Natural killer cell (primary cell): ENCODE measurements at regions of chr11 and their contacts with region 1.

Region 1: GRCh38 chr11:125887373-125888324 is at the start of gene HYLS1:
- DNase-seq: peak; percentile 98
- ATAC-seq: peak; percentile 75 to 91 (median 85)
- H3K4me3 ChIP-seq: peak within 1 kb of the TSS; percentile 90
- H3K4me3 Mint-ChIP-seq: peak within 1 kb of the TSS; percentile 96
- H3K27ac ChIP-seq: peak within 1 kb of the TSS; percentile 95
- H3K27ac Mint-ChIP-seq: peak within 1 kb of the TSS; percentile 94 to 97
- H3K4me1 ChIP-seq: peaks cover 15% of the 10 kb centered on the region
- H3K4me1 Mint-ChIP-seq: peaks cover 17 to 22% of the 10 kb centered on the region in 2 donors
- H3K27me3 ChIP-seq: no peaks in the 10 kb centered on the region
- H3K27me3 Mint-ChIP-seq: peaks cover 0 to 4% of the 10 kb centered on the region in 2 donors
- CTCF ChIP-seq: no peak
- total RNA-seq, gene HYLS1: 4.4 to 6.8 (median 5.6) TPM

Region 2: DNA sequence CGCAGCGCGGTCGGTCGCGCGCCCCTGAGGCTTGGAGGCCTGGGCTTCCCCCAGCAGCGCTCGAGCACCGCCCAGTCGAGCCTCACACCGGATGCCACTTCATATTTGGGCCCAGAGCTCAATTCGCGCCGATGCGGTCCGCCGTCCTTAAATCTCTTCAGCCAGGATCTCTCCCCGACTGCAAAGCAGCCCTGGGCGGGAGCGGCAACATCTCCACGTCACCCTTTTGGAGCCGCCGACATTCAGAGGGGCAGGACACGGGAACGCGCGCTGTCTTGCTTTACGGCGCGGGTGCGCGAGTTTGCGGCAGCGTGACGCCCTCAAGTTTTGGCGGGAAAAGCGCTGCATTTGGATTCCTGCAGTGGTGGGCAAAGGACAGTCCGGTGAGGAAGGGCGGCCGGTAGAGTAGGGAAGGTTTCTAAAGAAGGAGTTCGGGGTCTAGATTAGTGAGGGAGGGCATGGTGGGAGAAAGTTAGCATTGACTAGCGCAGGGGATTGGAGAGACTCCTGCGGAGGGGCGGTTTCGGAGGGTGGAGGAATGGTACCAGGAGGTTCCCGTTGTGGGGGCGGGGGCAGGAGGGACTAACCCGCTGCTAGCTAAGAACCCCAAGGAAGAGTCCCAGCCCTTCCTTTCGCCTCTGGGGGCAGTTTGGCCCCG is 261.9 kb before region 1 on chr11:
- intact Hi-C with region 1: loop called (anchors 2 kb)
- DNase-seq: peak; percentile 80 to 89
- ATAC-seq: peak; percentile 95 to 96 (median 96)
- H3K4me3 ChIP-seq: peak overlapping the region; percentile 93
- H3K4me3 Mint-ChIP-seq: peak overlapping the region; percentile 97
- H3K27ac ChIP-seq: peak overlapping the region; percentile 98
- H3K27ac Mint-ChIP-seq: peak overlapping the region; percentile 97 to 98
- H3K4me1 ChIP-seq: peaks cover 18% of the 10 kb centered on the region
- H3K4me1 Mint-ChIP-seq: peaks cover 19 to 20% of the 10 kb centered on the region in 2 donors
- H3K27me3 ChIP-seq: no peaks in the 10 kb centered on the region
- H3K27me3 Mint-ChIP-seq: no peaks in the 10 kb centered on the region
- CTCF ChIP-seq: no peak

Region 3: GRCh38 chr11:125772834-125773505 is 114.7 kb before region 1 on chr11:
- intact Hi-C with region 1: no loop called
- DNase-seq: no peak
- ATAC-seq: no peak
- H3K4me3 ChIP-seq: no peak overlapping the region
- H3K4me3 Mint-ChIP-seq: no peak overlapping the region
- H3K27ac ChIP-seq: no peak overlapping the region
- H3K27ac Mint-ChIP-seq: no peak overlapping the region
- H3K4me1 ChIP-seq: no peaks in the 10 kb centered on the region
- H3K4me1 Mint-ChIP-seq: no peaks in the 10 kb centered on the region
- H3K27me3 ChIP-seq: no peaks in the 10 kb centered on the region
- H3K27me3 Mint-ChIP-seq: peaks cover 12 to 22% of the 10 kb centered on the region in 2 donors
- CTCF ChIP-seq: no peak

Region 4: DNA sequence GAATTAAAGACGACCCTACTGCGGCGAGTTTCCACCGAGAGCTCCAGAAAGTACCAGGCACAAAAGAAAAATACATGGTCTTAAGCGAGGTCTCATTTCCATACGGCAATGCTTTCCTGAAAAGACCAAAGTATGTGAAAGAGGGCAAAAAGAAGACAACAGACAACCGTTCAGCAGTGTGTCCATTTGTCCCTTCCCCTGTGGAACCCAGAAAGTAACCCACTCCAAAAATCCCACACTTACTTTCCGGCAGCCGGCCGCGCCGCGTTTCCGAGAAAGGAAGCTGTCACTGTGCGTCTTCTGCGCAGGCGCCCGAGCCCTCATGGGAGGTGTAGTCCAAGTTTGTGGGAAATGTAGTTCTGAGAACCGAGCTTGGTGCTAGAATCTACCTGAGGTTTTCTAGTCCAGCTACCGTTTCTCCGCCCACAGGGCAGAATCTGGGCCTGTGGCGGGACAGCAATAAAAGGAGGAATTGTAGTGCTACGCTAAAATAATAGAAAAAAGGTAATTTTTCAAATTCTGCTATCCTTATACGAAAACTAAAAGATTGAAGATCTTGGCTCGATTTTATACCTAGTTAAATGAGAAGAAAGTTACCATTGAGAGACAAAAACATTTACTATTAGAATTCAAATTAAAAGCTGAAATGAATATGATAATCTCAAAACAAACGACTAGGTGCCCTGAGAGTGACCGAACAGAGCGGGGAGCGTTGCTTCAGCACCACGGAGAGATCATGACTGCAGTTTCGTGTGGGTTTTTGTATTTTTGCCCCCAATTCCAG is 15.5 kb after region 1 on chr11 and contains the start of gene PUS3:
- intact Hi-C with region 1: loop called (anchors 2 kb)
- DNase-seq: peak; percentile 79 to 92
- ATAC-seq: peak; percentile 91 to 95 (median 93)
- H3K4me3 ChIP-seq: peak within 1 kb of the TSS; percentile 55
- H3K4me3 Mint-ChIP-seq: peak within 1 kb of the TSS; percentile 96
- H3K27ac ChIP-seq: peak within 1 kb of the TSS; percentile 32
- H3K27ac Mint-ChIP-seq: peak within 1 kb of the TSS; percentile 89 to 91
- H3K4me1 ChIP-seq: peaks cover 24% of the 10 kb centered on the region
- H3K4me1 Mint-ChIP-seq: peaks cover 13 to 15% of the 10 kb centered on the region in 2 donors
- H3K27me3 ChIP-seq: peaks cover 21% of the 10 kb centered on the region
- H3K27me3 Mint-ChIP-seq: peaks cover 18 to 30% of the 10 kb centered on the region in 2 donors
- CTCF ChIP-seq: no peak
- total RNA-seq, gene PUS3: 3.6 to 6.7 (median 3.6) TPM